Left colon (tissue), 2 donors: ENCODE measurements at regions of chr3 and their contacts with region 1.

Region 1: DNA sequence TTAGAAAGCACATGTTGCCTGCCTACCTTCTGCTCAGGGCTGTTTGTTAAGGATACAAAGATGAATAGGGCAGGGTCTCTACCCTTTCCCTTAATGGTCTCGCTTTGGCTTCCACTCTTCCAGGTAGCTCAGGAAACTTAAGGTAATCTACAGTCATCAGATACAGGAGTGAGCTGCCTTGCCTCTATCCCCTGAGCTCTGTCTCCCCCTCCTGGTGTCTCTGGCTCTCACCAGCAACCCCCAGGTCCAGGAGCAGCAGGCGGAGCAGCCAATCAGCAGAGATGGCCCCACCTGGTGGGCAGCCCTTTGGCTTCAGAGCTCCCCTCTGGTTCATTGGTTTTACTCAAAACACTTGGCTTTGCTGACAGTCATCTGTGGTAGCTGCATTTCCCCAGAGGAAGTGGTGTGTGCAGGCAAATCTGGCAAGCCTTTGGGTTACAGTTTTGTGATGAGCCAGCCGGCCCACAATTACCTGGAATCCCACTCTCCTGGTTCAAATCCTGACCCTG is 8.5 kb upstream of the CX3CR1 start:
- DNase-seq: peak; percentile 80 to 86
- ATAC-seq: peak; percentile 88

Region 2: DNA sequence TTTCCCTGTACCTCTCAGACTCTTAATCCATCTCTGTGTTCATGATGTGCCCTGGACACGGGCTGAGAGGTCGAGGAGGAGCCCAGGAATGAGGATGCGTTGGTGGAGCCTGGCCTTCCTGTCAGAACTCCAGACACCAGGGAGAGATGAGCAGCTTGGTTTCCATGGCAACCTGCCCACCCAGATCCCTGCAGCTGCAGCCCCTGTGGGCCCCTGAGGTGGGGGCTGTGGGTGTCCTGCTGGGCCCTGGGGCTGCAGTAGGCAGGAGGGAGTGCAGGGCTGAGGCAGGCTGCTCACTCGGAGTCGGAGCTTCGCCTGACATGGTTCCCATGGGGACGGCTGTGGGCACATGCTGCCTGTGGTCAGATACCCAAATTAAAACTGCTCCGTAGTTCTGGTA is 464.6 kb before region 1 on chr3:
- intact Hi-C with region 1: no loop called
- DNase-seq: no peak
- ATAC-seq: no peak

Region 3: DNA sequence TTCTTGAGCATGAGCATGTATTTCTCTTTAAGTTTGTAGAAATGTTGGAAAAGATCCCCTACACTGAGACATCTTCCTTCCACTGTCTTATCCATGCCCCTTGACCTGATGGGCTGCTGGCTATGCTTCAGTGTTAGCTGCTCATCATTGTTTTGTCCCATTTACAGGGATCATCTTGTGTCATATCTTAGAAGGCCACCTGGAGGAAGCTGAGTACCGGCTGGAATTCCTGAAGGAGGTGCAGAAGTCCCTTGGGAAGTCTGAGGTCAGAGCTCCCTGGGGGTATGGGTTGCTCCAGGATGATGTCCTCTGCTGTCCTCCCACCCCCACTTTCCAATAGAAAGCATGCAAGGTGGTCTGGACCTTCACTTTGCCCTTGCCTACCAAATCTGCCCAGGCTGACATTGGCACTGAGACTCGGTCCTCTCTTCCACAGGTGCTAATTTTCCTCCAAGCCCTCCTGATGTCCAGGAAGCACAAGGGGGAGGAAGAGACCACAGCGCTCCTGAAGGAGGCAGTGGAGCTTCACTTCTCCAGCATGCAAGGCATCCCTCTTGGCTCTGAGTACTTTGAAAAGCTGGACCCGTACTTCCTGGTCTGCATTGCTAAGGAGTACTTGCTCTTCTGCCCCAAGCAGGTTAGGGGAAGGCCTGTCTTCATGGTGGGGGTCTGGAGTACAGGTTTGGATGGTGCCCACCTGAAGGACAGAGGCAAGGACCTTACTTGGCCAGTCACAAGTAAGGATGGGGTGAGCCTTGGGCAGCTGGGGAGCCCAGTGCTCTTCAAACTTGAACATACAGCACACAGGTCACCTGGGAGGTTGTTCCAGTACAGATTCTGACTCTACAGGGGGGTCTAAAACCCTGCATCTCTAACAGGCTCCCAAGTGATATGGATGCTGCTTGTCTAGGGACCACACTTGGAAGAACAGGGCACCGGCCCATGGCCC is 163.2 kb before region 1 on chr3:
- intact Hi-C with region 1: loop called (anchors 5 to 10 kb)
- DNase-seq: peak in 1 of 2 donors; percentile 58
- ATAC-seq: peak; percentile 90

Region 4: DNA sequence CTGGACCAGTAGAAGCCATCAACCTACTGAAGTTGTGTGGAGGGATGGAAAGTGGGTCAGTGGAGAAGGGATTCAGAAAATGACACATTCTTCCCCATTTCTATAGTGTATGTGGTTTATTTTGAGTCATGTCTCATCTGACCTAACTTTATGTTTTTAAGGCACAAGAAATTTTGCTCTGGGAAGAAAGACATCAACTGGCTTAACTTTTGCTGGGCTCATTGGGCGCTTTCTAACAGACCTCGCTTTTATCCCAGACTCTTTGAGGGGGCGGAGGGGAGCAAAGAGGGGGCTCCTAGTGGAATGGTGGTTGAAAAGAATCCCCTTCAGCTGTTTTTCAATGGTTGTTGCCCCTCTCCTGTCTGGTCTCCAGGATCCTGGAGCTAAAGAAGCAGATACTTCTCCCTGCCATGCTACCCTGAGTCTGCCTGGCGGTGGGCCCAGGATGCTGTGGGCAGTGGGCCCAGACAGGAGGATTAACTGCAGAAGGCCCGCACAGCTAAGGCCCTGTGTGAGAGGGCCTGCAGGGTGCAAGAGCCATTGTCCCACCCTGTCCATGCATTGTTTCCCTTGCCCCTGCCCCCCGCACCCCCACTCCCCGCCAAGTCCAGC is 149.4 kb before region 1 on chr3:
- intact Hi-C with region 1: loop called in 1 of 2 experiments (anchors 10 kb)
- DNase-seq: no peak
- ATAC-seq: no peak

Region 5: DNA sequence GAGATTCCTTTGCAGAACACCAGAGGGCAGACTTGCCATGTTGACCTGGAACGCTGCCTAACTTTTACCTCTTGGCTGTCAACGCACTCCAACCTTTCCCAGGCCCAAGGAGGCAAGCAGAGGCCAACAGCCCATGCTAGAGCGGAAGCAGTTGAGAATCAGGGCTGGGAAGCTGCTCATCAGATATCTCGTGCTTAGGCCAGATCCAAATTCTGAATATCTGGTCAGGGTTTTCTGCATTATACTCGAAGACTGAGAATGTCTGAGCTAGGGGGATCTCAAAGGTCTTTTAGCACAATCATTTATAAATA is 98.4 kb before region 1 on chr3:
- intact Hi-C with region 1: loop called in 1 of 2 experiments (anchors 5 kb)
- DNase-seq: peak; percentile 55 to 57
- ATAC-seq: peak; percentile 88

Region 6: GRCh38 chr3:39208463-39209055 is 79.8 kb before region 1 on chr3:
- intact Hi-C with region 1: loop called in 1 of 2 experiments (anchors 10 kb)
- DNase-seq: peak in 1 of 2 donors; percentile 67
- ATAC-seq: peak; percentile 94